ENCODE measurements at regions of chr11 and their contacts with region 1.

Region 1: GRCh38 chr11:76318744-76319384 is 62.1 kb downstream of the THAP12 start:
- DNase-seq: peak; percentile 84
- H3K4me3 Mint-ChIP-seq: no peak overlapping the region
- H3K27ac Mint-ChIP-seq: no peak overlapping the region
- H3K4me1 Mint-ChIP-seq: peaks cover 23% of the 10 kb centered on the region
- H3K27me3 Mint-ChIP-seq: peaks cover 33% of the 10 kb centered on the region

Region 2: GRCh38 chr11:75896843-75897419 is 421.9 kb before region 1 on chr11:
- CTCF ChIA-PET with region 1: interaction called, 21 read pairs
- POLR2A ChIA-PET with region 1: no interaction called
- DNase-seq: no peak
- H3K4me3 Mint-ChIP-seq: no peak overlapping the region
- H3K27ac Mint-ChIP-seq: no peak overlapping the region
- H3K4me1 Mint-ChIP-seq: no peaks in the 10 kb centered on the region
- H3K27me3 Mint-ChIP-seq: no peaks in the 10 kb centered on the region

Region 3: GRCh38 chr11:76235233-76236091 is 83.4 kb before region 1 on chr11:
- CTCF ChIA-PET with region 1: no interaction called
- POLR2A ChIA-PET with region 1: interaction called, 12 read pairs
- DNase-seq: peak; percentile 93
- H3K4me3 Mint-ChIP-seq: peak overlapping the region; percentile 88
- H3K27ac Mint-ChIP-seq: peak overlapping the region; percentile 88
- H3K4me1 Mint-ChIP-seq: peaks cover 51% of the 10 kb centered on the region
- H3K27me3 Mint-ChIP-seq: peaks cover 35% of the 10 kb centered on the region

Region 4: DNA sequence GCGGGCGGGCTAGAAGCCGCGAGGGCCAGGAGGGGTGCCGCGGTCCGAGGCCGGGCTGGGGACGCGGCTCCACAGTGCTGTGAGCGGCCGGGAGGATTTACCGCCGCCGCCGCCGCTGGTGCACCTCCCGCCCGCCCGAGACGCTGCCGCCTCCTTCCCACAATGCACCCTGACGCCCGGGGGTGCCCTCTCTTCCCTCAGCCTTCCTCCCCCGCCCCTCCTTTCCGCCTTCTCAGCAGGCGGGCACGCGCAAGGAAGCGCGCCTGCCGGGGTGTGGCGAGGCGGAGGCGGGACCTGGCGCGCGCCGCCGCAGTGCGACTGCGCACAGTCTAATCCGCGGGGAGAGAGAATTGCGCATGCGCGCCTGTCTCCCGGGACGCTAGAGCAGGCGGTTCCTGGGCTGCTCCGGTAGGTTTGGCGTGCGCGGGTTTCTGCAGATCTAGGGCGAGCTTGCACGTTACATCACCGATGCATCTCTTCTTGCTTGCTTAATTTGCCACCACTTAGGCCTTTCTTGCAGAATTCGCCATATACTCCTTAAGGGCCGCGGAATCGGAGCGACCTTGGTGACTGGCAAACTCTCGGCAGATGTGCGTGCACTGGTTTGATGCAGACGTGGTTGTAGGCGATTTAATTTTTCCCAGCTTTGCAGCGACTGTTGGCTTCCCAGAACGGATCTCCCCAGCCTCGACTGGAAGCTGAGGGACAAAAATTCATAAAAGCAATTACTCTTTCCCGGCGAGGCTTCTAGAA is 62.3 kb after region 1 on chr11 and contains the starts of genes GVQW3 and THAP12:
- CTCF ChIA-PET with region 1: no interaction called
- POLR2A ChIA-PET with region 1: interaction called, 16 read pairs
- DNase-seq: peak; percentile 98
- H3K4me3 Mint-ChIP-seq: peak within 1 kb of the TSS; percentile 91
- H3K27ac Mint-ChIP-seq: peak within 1 kb of the TSS; percentile 85
- H3K4me1 Mint-ChIP-seq: peaks cover 50% of the 10 kb centered on the region
- H3K27me3 Mint-ChIP-seq: no peaks in the 10 kb centered on the region
- total RNA-seq, gene GVQW3: 2.8 to 3.7 TPM
- total RNA-seq, gene THAP12: 51.1 to 52.9 TPM